ENCODE measurements at regions of chr11 and their contacts with region 1.

Region 1: DNA sequence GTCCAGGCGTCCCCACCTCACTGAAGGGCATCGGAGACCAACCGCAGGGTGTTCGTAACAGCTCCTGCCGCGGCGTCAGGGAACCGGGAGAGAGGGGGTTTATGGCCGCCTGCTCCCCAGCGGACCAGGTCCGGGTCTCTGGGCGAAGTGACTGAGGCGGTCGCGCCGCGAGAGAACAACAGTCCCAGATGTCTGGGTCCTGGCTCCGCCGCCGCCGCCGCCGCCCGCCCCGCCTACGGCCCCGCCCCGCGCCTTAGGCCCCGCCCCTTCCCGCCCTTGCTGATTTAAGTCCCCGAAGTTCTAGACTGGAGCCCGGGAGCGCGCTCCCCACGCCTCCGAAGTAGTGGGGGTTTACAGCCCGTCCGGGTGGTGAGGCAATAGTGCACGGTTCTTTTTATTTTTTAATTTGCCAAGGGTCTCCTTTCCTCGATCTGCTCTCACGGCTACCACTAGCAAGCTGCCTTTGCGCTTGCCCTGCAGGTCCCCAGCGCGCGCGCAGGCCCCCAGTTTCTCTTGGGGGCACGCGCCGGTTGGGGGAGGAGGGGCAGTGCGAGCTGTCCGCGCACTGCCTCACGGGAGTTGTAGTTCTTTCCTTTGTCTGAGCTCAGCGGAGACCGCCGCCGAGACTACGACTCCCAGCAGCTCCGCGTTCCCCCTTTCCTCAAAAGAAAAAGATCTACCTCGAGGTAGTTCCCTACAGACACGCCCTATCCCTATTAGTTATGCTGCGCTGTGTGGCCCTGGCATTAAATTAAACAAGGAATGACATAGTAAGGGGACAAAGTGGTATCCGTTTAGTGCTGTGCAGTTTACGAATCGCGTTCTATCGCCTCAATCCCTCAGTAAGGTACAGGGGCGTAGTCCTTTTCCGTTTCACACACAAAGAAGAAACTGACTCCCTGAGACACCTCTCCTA is at the start of gene PGM2L1:
- DNase-seq: peak; percentile 88
- H3K4me3 Mint-ChIP-seq: peak within 1 kb of the TSS; percentile 96
- H3K27ac Mint-ChIP-seq: peak within 1 kb of the TSS; percentile 99
- H3K4me1 Mint-ChIP-seq: peaks cover 36% of the 10 kb centered on the region
- H3K27me3 Mint-ChIP-seq: peaks cover 2% of the 10 kb centered on the region
- total RNA-seq, gene PGM2L1: 4.0 and 4.5 TPM in 2 replicates

Region 2: GRCh38 chr11:73307323-73308002 is 1091.0 kb before region 1 on chr11:
- intact Hi-C with region 1: loop called (anchors 5 kb)
- DNase-seq: peak; percentile 78
- H3K4me3 Mint-ChIP-seq: peak overlapping the region; percentile 87
- H3K27ac Mint-ChIP-seq: no peak overlapping the region
- H3K4me1 Mint-ChIP-seq: peaks cover 12% of the 10 kb centered on the region
- H3K27me3 Mint-ChIP-seq: peaks cover 39% of the 10 kb centered on the region

Region 3: GRCh38 chr11:73647459-73648100 is 750.9 kb before region 1 on chr11:
- intact Hi-C with region 1: loop called (anchors 1 kb)
- DNase-seq: peak; percentile 84
- H3K4me3 Mint-ChIP-seq: peak overlapping the region; percentile 54
- H3K27ac Mint-ChIP-seq: no peak overlapping the region
- H3K4me1 Mint-ChIP-seq: peaks cover 14% of the 10 kb centered on the region
- H3K27me3 Mint-ChIP-seq: peaks cover 9% of the 10 kb centered on the region

Region 4: GRCh38 chr11:73982969-73983740 is 415.3 kb before region 1 on chr11:
- intact Hi-C with region 1: loop called (anchors 5 kb)
- DNase-seq: peak; percentile 94
- H3K4me3 Mint-ChIP-seq: peak overlapping the region; percentile 100
- H3K27ac Mint-ChIP-seq: peak overlapping the region; percentile 99
- H3K4me1 Mint-ChIP-seq: peaks cover 55% of the 10 kb centered on the region
- H3K27me3 Mint-ChIP-seq: no peaks in the 10 kb centered on the region

Region 5: DNA sequence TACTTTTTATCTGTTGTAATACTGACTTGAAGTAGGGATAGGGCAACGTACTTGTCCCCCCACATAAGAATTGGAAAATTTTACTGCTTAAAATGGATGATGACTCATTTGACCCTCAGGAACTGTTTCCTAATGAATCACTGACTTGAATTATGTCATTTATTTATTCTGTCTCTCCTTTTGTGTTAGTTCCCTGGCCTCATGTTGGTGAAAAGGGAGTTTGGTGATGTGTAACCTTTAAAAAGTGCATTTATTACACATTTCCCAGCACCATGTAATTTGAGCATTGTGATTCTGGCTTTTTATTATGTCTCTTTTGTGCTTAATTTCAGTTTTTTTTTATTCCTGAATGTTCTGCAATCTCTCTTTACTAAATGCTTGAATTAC is 20.0 kb after region 1 on chr11:
- intact Hi-C with region 1: loop called (anchors 1 kb)
- DNase-seq: no peak
- H3K4me3 Mint-ChIP-seq: no peak overlapping the region
- H3K27ac Mint-ChIP-seq: peak overlapping the region; percentile 74
- H3K4me1 Mint-ChIP-seq: peaks cover 17% of the 10 kb centered on the region
- H3K27me3 Mint-ChIP-seq: peaks cover 2% of the 10 kb centered on the region

Region 6: DNA sequence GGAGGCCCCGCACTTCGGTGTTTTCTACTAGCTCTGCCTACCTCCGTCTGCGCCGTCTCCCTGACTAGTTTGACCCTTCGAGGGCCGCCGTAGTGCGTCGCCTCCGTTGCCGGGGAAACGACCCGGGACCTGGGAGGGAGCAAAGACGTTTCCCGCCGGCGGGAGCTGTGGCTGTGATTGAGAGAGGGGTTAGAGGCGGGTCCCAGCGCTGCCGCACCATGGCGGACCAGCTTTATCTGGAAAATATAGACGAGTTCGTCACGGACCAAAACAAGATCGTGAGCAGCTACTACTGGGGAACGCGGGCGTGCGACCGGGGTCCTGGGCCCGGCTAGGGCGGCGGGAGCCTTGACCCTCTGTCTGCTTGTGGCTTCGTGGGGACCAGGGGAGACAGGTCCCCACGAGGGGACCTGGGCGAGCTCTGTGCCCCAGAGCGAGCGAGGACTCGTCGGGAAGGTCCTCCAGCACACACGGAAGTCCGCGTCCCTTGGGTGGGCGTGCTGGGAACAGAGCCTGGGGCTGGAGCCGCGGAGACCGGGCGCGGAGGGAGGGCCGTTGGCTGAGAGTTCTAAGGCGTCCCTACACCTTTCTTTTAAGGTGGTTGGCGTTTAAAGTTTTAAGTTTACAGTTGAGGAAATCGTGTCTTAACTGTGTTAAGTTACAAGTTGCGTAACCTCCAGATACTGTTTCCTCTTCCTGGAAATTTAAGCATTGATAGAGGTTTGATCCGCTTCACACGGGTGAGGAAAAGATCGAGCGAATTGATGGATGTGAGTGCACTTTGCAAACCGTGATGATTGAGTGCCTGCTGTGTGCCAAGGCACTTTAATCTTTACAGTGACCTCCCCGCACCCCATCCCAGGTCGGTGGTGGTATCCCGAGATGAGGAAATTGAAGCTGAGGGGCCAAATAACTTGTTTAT is 194.2 kb after region 1 on chr11 and contains the start of gene POLD3:
- intact Hi-C with region 1: loop called (anchors 1 kb)
- DNase-seq: peak; percentile 90
- H3K4me3 Mint-ChIP-seq: peak within 1 kb of the TSS; percentile 100
- H3K27ac Mint-ChIP-seq: peak within 1 kb of the TSS; percentile 98
- H3K4me1 Mint-ChIP-seq: peaks cover 30% of the 10 kb centered on the region
- H3K27me3 Mint-ChIP-seq: peaks cover 3% of the 10 kb centered on the region
- total RNA-seq, gene POLD3: 50.1 and 52.7 TPM in 2 replicates

Region 7: GRCh38 chr11:75241036-75241905 is 842.8 kb after region 1 on chr11:
- intact Hi-C with region 1: loop called (anchors 5 kb)
- DNase-seq: peak; percentile 89
- H3K4me3 Mint-ChIP-seq: peak overlapping the region; percentile 58
- H3K27ac Mint-ChIP-seq: no peak overlapping the region
- H3K4me1 Mint-ChIP-seq: peaks cover 6% of the 10 kb centered on the region
- H3K27me3 Mint-ChIP-seq: peaks cover 52% of the 10 kb centered on the region

Measured in activated T-helper 1 cell treated with anti-CD3 and anti-CD28 coated beads, Interleukin-12 subunit alpha, Interleukin-12 subunit beta, Interleukin-2, Interleukin-4 antibody, amounts not matched to agents 30 ng/mL and 10 ng/mL and 1 ng/mL, durations not matched to agents 14 hours and 24 hours and 36 hours (primary cell).